Activated naive CD8-positive, alpha-beta T cell treated with anti-CD3 and anti-CD28 coated beads, Interleukin-2, amount 10 ng/mL, durations not matched to agents 7 days and 5 days (primary cell): ENCODE measurements at regions of chr22 and their contacts with region 1.

Region 1: GRCh38 chr22:41301105-41302020 is at the start of gene ZC3H7B:
- DNase-seq: peak; percentile 83
- ATAC-seq: peak; percentile 99
- H3K4me3 Mint-ChIP-seq: peak within 1 kb of the TSS; percentile 86
- H3K27ac Mint-ChIP-seq: peak within 1 kb of the TSS; percentile 68
- H3K4me1 Mint-ChIP-seq: peaks cover 27% of the 10 kb centered on the region
- H3K27me3 Mint-ChIP-seq: no peaks in the 10 kb centered on the region
- total RNA-seq, gene ZC3H7B: 49.0 to 51.3 TPM

Region 2: GRCh38 chr22:41197038-41197972 is 104.1 kb before region 1 on chr22:
- POLR2A ChIA-PET with region 1: no interaction called
- DNase-seq: peak; percentile 88
- ATAC-seq: peak; percentile 84
- H3K4me3 Mint-ChIP-seq: peak overlapping the region; percentile 86
- H3K27ac Mint-ChIP-seq: no peak overlapping the region
- H3K4me1 Mint-ChIP-seq: peaks cover 9% of the 10 kb centered on the region
- H3K27me3 Mint-ChIP-seq: peaks cover 22% of the 10 kb centered on the region

Region 3: GRCh38 chr22:41285820-41286638 is 15.3 kb before region 1 on chr22 and contains the start of gene RANGAP1:
- POLR2A ChIA-PET with region 1: interaction called, 80 read pairs
- DNase-seq: peak; percentile 96
- ATAC-seq: peak; percentile 96
- H3K4me3 Mint-ChIP-seq: peak within 1 kb of the TSS; percentile 95
- H3K27ac Mint-ChIP-seq: peak within 1 kb of the TSS; percentile 96
- H3K4me1 Mint-ChIP-seq: peaks cover 18% of the 10 kb centered on the region
- H3K27me3 Mint-ChIP-seq: no peaks in the 10 kb centered on the region
- total RNA-seq, gene RANGAP1: 93.6 to 98.3 TPM

Region 4: GRCh38 chr22:41565403-41566054 is 264.2 kb after region 1 on chr22:
- POLR2A ChIA-PET with region 1: interaction called, 12 read pairs
- DNase-seq: no peak
- ATAC-seq: peak; percentile 86
- H3K4me3 Mint-ChIP-seq: no peak overlapping the region
- H3K27ac Mint-ChIP-seq: no peak overlapping the region
- H3K4me1 Mint-ChIP-seq: peaks cover 3% of the 10 kb centered on the region
- H3K27me3 Mint-ChIP-seq: peaks cover 17% of the 10 kb centered on the region